Activated CD4-positive, alpha-beta T cell treated with anti-CD3 and anti-CD28 coated beads, Interleukin-2, amount 10 ng/mL, durations not matched to agents 24 days and 14 days (primary cell): ENCODE measurements at regions of chr15 and their contacts with region 1.

Region 1: DNA sequence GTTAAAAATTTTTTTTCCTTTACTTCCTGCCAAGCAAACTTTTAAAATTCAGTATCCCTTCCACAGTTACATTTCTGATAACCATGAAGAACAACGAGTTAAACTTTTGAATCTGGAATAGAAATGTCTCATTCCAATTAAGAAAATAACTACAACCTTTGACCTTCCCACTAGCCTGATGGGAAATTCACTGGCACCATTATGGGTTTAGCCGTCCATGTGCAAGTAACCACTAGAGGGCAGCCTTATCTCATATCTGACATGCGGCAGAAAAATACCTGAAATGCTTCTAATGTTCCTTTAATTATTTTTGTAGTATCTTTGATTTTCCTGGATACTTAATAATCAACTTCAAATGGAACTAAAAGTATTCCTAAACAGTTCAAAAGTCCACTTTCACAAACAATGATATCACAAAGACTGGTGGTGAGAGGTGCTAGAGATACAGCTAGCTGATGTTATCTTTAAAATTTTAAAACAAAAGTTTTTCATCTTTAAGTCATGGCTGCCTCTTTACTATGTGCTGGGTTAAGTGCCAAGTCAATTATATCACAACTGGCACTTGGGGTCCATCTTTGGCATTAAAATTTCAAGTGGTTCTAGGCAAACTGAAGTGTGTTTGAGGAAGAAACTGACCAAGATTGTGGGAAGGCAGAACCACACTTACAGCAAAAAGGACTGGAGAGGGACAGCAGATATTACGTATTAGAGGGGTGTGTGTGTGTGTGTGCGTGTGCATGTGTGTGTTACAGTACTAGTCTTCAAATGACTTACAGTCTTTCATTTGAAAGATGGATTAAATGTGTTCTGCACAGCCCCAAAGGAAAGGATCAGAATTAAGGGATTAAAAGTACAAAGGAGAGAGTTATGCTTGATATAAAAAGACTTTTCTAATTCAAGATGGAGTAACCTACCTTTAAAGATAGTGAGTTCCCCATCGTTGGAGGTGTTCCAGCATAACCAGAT is 107.1 kb upstream of the ICE2 start:
- DNase-seq: peak; percentile 89
- H3K4me3 Mint-ChIP-seq: peak overlapping the region; percentile 75
- H3K27ac Mint-ChIP-seq: peak overlapping the region; percentile 87
- H3K4me1 Mint-ChIP-seq: peaks cover 66% of the 10 kb centered on the region
- H3K27me3 Mint-ChIP-seq: no peaks in the 10 kb centered on the region

Region 2: GRCh38 chr15:60397772-60398445 is 188.1 kb before region 1 on chr15 and contains the start of gene ANXA2:
- intact Hi-C with region 1: loop called (anchors 5 kb)
- DNase-seq: peak; percentile 94
- H3K4me3 Mint-ChIP-seq: peak within 1 kb of the TSS; percentile 92
- H3K27ac Mint-ChIP-seq: peak within 1 kb of the TSS; percentile 94
- H3K4me1 Mint-ChIP-seq: peaks cover 51% of the 10 kb centered on the region
- H3K27me3 Mint-ChIP-seq: peaks cover 4% of the 10 kb centered on the region
- total RNA-seq, gene ANXA2: 214 and 225 TPM in 2 replicates

Region 3: GRCh38 chr15:60520825-60521368 is 65.1 kb before region 1 on chr15:
- intact Hi-C with region 1: loop called (anchors 2 kb)
- DNase-seq: peak; percentile 93
- H3K4me3 Mint-ChIP-seq: peak overlapping the region; percentile 8
- H3K27ac Mint-ChIP-seq: peak overlapping the region; percentile 59
- H3K4me1 Mint-ChIP-seq: peaks cover 36% of the 10 kb centered on the region
- H3K27me3 Mint-ChIP-seq: no peaks in the 10 kb centered on the region

Region 4: DNA sequence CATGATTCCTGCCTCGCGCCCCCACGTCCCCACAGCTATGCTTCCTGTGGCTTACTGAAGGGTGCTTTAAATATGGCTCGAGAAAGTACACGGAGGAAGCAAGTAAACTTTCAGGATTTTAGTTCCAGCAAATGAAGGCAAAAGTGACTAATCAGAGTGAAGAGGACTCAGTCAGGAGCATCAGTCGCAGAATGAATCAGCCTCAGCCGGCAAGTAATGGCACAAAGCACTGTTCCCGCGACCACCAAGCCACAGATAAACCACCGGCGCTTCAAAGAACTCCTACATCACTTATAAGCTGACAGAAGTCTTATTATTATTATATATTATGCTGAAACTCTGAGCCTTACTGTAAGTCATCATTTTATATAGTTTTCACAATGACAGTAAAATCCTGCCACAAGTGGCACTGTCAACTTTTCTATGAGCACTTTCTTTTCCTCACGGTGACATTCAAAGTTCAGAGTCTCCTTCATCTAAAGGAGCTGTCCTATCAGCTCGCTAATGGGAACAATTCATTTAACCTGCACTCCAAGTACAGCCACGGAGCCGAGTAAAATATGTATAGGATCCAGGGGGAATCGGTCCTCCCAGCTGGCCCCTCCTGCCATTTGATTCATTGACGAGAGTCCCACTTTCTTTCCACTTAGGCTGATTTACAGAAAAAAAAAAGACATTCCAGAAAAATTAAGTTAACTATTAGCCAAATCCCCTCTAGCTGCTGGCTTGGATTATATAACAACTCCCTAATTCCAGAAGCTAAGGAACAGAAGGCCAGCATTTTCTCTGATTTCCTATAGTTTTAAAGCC is 109.9 kb after region 1 on chr15:
- intact Hi-C with region 1: loop called (anchors 2 kb)
- DNase-seq: peak; percentile 81
- H3K4me3 Mint-ChIP-seq: peak overlapping the region; percentile 66
- H3K27ac Mint-ChIP-seq: peak overlapping the region; percentile 79
- H3K4me1 Mint-ChIP-seq: peaks cover 42% of the 10 kb centered on the region
- H3K27me3 Mint-ChIP-seq: no peaks in the 10 kb centered on the region

Region 5: GRCh38 chr15:60899322-60899966 is 313.4 kb after region 1 on chr15:
- intact Hi-C with region 1: loop called (anchors 2 kb)
- DNase-seq: peak; percentile 80
- H3K4me3 Mint-ChIP-seq: peak overlapping the region; percentile 43
- H3K27ac Mint-ChIP-seq: peak overlapping the region; percentile 82
- H3K4me1 Mint-ChIP-seq: peaks cover 49% of the 10 kb centered on the region
- H3K27me3 Mint-ChIP-seq: peaks cover 4% of the 10 kb centered on the region

Region 6: GRCh38 chr15:61195116-61196002 is 609.3 kb after region 1 on chr15:
- intact Hi-C with region 1: loop called (anchors 10 kb)
- DNase-seq: peak; percentile 68
- H3K4me3 Mint-ChIP-seq: no peak overlapping the region
- H3K27ac Mint-ChIP-seq: no peak overlapping the region
- H3K4me1 Mint-ChIP-seq: no peaks in the 10 kb centered on the region
- H3K27me3 Mint-ChIP-seq: peaks cover 31% of the 10 kb centered on the region

Region 7: DNA sequence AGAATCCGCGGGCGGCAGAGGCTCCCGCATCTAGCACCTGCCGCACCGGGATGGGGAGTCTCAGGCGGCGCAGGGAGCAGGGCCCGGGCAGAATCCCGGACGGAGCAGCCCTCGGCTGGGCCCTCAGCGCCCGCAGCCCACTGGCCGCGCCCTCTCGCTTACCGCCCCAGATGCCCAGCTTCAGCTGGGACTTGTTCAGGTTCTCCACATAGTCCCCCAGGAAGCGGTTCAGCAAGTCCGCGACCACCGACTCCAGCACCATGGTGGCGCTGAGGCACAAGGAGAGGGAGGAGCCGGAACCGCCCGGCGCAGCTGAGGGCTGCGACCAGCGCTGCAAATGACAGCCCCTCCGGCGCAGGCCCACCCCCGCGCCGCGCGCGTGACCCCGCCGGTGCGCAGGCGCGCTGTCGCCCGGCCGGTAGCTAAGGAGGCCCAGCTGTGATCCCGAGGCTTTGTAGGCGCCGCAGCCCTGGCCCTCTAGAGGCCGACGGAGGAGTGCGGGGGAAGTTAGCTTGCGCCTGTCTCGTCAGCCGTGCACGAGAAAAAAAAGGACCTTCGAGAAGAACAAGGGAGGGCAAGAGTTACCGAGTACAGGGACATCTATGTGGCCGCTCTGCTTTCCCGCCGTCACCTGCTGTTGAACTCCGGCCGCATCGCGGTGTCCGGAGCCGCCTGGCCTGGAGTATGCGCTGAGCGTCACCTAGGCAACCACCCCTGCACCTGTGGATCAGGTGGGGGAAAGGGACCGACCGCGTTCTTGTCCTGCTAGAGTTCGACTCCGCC is 1474.3 kb after region 1 on chr15 and contains the start of gene VPS13C:
- intact Hi-C with region 1: loop called (anchors 10 kb)
- DNase-seq: peak; percentile 98
- H3K4me3 Mint-ChIP-seq: peak within 1 kb of the TSS; percentile 93
- H3K27ac Mint-ChIP-seq: peak within 1 kb of the TSS; percentile 98
- H3K4me1 Mint-ChIP-seq: peaks cover 31% of the 10 kb centered on the region
- H3K27me3 Mint-ChIP-seq: peaks cover 24% of the 10 kb centered on the region
- total RNA-seq, gene VPS13C: 51.5 and 54.8 TPM in 2 replicates